Testis (tissue), 5 donors: ENCODE measurements at regions of chr12 and their contacts with region 1.

Region 1: DNA sequence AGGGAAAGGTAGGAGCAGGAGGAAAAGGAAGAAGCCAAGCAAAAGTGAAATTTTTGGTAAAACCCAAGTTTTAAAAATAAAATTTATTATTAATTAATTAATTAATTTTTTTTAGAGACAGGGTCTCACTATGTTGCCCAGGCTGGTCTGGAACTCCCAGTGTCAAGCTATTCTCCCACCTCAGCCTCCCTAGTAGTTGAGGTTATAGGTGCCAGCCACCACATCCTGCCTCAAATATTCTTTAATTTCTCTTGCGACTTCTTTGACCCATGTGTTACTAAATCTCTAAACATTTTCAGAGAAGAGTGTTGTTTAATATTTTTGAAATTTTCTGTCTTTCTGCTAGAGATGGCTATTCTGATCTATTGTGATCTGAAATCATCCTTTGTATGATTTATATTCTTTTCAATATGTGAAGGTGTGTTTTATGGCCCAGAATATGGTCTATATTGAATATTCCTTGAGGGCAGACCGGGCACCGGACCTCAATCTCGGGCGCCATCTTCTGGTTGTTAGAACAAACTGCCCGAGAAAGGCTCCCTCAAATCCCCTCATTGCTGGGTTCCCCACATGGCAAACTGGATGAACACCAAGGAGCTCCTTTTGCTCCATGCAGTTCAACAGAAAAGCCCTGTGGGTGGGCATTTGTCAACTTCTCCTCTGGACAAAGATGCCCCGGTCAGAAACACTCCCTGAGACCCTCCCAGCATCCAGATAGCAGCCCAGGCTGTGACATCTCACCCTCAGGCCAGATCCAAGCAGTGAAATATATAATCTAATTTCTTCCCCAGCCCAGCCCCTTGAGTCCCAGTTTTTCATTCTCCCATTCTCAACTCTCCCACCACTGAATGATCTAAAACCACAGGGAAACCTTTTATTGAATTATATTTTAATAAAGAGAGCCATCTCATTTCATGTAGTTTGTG is 110.5 kb downstream of the ASCL4 start:
- DNase-seq: peak; percentile 59
- H3K4me3 ChIP-seq: no peak overlapping the region
- H3K27ac ChIP-seq: no peak overlapping the region
- H3K4me1 ChIP-seq: no peaks in the 10 kb centered on the region
- H3K27me3 ChIP-seq: no peaks in the 10 kb centered on the region
- CTCF ChIP-seq: peak in 2 of 3 experiments; percentile 45 to 65
- POLR2A ChIP-seq: no peak

Region 2: GRCh38 chr12:107668320-107669098 is 216.5 kb before region 1 on chr12:
- intact Hi-C with region 1: loop called (anchors 5 kb)
- DNase-seq: no peak
- H3K4me3 ChIP-seq: no peak overlapping the region
- H3K27ac ChIP-seq: no peak overlapping the region
- H3K4me1 ChIP-seq: no peaks in the 10 kb centered on the region
- H3K27me3 ChIP-seq: no peaks in the 10 kb centered on the region
- CTCF ChIP-seq: no peak
- POLR2A ChIP-seq: no peak

Region 3: GRCh38 chr12:107938446-107938845 is 53.4 kb after region 1 on chr12:
- intact Hi-C with region 1: no loop called
- DNase-seq: no peak
- H3K4me3 ChIP-seq: no peak overlapping the region
- H3K27ac ChIP-seq: no peak overlapping the region
- H3K4me1 ChIP-seq: no peaks in the 10 kb centered on the region
- H3K27me3 ChIP-seq: no peaks in the 10 kb centered on the region
- CTCF ChIP-seq: no peak
- POLR2A ChIP-seq: no peak

Region 4: GRCh38 chr12:108052260-108052659 is 167.2 kb after region 1 on chr12:
- intact Hi-C with region 1: no loop called
- DNase-seq: no peak
- H3K4me3 ChIP-seq: no peak overlapping the region
- H3K27ac ChIP-seq: no peak overlapping the region
- H3K4me1 ChIP-seq: no peaks in the 10 kb centered on the region
- H3K27me3 ChIP-seq: no peaks in the 10 kb centered on the region
- CTCF ChIP-seq: no peak
- POLR2A ChIP-seq: no peak